ENCODE measurements at regions of chr17 and their contacts with region 1.

Region 1: GRCh38 chr17:28416703-28417311 is 10.8 kb upstream of the SLC46A1 start:
- DNase-seq: peak; percentile 79
- H3K4me3 ChIP-seq: no peak overlapping the region
- H3K4me1 ChIP-seq: peaks cover 5% of the 10 kb centered on the region
- H3K27me3 ChIP-seq: no peaks in the 10 kb centered on the region

Region 2: DNA sequence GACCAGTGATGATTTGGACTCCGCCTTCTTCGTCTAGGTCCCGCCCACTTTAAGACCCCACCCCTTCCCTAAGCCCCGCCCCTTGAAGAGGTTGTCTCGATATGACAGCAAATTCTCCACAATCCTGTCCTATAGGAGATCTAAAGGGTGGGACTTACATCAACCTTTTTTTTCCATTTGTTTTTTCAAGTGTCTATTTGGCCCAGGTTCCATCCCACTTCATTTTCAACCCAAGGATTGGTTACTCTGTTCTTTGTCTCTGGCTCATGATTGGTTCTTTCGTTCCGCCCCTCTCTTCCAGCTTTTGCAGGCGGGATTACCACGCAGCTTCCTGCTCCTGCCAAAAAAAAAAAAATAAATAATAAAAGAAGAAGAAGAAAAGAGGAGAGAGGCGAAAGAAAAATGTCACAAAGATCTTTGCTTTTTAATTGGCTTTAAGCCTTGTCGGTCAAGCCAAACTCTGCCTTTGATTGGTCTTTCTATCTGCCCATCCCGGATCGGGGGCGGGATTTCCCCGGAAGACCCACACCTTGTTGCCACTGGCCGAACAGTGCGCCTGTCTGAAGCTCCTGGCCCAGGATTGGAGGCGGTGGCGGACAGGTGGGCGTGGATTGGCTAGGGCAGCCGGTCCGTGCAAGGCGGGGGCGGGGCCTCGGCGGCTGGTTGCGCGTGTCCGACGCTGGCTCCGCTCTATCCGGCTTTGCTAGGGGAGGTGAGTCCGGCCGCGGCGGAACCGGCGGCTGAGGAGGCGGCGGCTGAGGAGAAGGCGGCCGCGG is 375.6 kb before region 1 on chr17:
- in situ Hi-C with region 1: loop called (anchors 25 kb)
- DNase-seq: peak; percentile 99 to 100
- H3K4me3 ChIP-seq: peak overlapping the region; percentile 77
- H3K4me1 ChIP-seq: peaks cover 26% of the 10 kb centered on the region
- H3K27me3 ChIP-seq: no peaks in the 10 kb centered on the region; the same call in 1 of the 2 replicates

Region 3: DNA sequence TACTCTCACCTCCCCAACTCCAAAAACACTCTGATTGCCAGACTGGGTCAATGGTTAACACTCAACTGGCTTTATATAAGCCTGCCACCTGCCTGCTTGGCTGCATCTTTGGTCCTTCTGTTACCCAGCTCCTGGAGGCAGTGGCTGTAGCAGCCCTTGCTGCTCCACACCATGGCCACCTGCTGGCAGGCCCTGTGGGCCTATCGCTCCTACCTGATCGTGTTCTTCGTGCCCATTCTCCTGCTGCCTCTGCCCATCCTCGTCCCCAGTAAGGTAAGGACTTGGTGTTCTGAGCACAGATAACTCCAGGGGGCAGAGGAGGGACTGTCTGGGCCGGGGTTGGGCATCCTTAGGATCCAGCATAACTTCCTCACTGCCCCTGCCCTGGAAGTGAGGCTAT is 56.7 kb after region 1 on chr17 and contains the start of gene SLC13A2:
- in situ Hi-C with region 1: loop called (anchors 5 kb)
- DNase-seq: no peak
- H3K4me3 ChIP-seq: no peak within 1 kb of the TSS
- H3K4me1 ChIP-seq: no peaks in the 10 kb centered on the region
- H3K27me3 ChIP-seq: peaks cover 9% of the 10 kb centered on the region

Measured in HAP-1 (cell line).